PC-9 (cell line): ENCODE measurements at regions of chr3 and their contacts with region 1.

Region 1: GRCh38 chr3:42871592-42872196 is 4.0 kb downstream of the CYP8B1 start:
- DNase-seq: no peak
- H3K4me3 ChIP-seq: no peak overlapping the region
- H3K27ac ChIP-seq: no peak overlapping the region
- H3K4me1 ChIP-seq: no peaks in the 10 kb centered on the region
- H3K27me3 ChIP-seq: no peaks in the 10 kb centered on the region
- CTCF ChIP-seq: no peak

Region 2: GRCh38 chr3:42751609-42752008 is 120.1 kb before region 1 on chr3:
- CTCF ChIA-PET with region 1: no interaction called
- POLR2A ChIA-PET with region 1: no interaction called
- intact Hi-C with region 1: no loop called
- DNase-seq: no peak
- H3K4me3 ChIP-seq: no peak overlapping the region
- H3K27ac ChIP-seq: no peak overlapping the region
- H3K4me1 ChIP-seq: 0 out of 2 replicates have a peak, but pooled peaks cover 10% of the 10 kb centered on the region
- H3K27me3 ChIP-seq: no peaks in the 10 kb centered on the region
- CTCF ChIP-seq: no peak

Region 3: GRCh38 chr3:42852441-42852840 is 19.3 kb before region 1 on chr3:
- CTCF ChIA-PET with region 1: no interaction called
- POLR2A ChIA-PET with region 1: no interaction called
- intact Hi-C with region 1: no loop called
- DNase-seq: no peak
- H3K4me3 ChIP-seq: no peak overlapping the region
- H3K27ac ChIP-seq: no peak overlapping the region
- H3K4me1 ChIP-seq: no peaks in the 10 kb centered on the region
- H3K27me3 ChIP-seq: no peaks in the 10 kb centered on the region
- CTCF ChIP-seq: no peak

Region 4: DNA sequence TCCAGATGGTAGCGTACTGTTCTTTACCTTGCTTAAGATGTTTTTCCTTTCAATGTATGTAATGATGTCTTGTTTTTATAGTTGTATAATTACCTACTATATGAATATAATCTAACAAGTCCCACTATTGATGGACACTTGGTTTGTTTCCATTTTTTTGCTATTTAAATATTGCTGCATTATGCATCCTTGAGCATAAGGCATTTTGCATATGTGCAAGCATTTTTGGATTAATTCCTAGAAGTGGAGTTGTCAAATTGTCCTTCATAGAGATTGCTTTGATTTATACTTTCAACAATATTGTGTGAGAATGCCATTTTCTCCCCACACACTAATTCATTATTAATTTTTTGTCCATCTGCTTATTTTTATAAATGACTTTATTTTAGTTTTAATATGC is 1387.7 kb after region 1 on chr3:
- CTCF ChIA-PET with region 1: interaction called, 12 read pairs
- POLR2A ChIA-PET with region 1: no interaction called
- intact Hi-C with region 1: no loop called
- DNase-seq: no peak
- H3K4me3 ChIP-seq: no peak overlapping the region
- H3K27ac ChIP-seq: no peak overlapping the region
- H3K4me1 ChIP-seq: peaks cover 8% of the 10 kb centered on the region
- H3K27me3 ChIP-seq: no peaks in the 10 kb centered on the region
- CTCF ChIP-seq: no peak